ENCODE measurements at regions of chr12 and their contacts with region 1.

Region 1: GRCh38 chr12:89333564-89334252 is 18.6 kb downstream of the DUSP6 start:
- DNase-seq: peak in 1 of 2 donors; percentile 28
- ATAC-seq: peak; percentile 53 to 90 (median 81)
- H3K4me3 ChIP-seq: no peak overlapping the region
- H3K27ac ChIP-seq: peak overlapping the region in 6 of 10 donors; percentile 4 to 63 (median 41)
- H3K4me1 ChIP-seq: peaks cover 0 to 22% (median 7%) of the 10 kb centered on the region in 9 donors
- H3K27me3 ChIP-seq: no peaks in the 10 kb centered on the region
- CTCF ChIP-seq: no peak

Region 2: GRCh38 chr12:89278169-89278568 is 55.5 kb before region 1 on chr12:
- intact Hi-C with region 1: loop called in 2 of 10 experiments (anchors 5 to 10 kb)
- DNase-seq: no peak
- ATAC-seq: peak in 1 of 8 donors; percentile 40
- H3K4me3 ChIP-seq: no peak overlapping the region
- H3K27ac ChIP-seq: peak overlapping the region in 3 of 10 donors; percentile 23 to 57 (median 38)
- H3K4me1 ChIP-seq: peaks cover 0 to 41% (median 11%) of the 10 kb centered on the region in 9 donors
- H3K27me3 ChIP-seq: no peaks in the 10 kb centered on the region
- CTCF ChIP-seq: no peak

Measured in heart right ventricle (tissue), 16 donors.